GM18951 (cell line): ENCODE measurements at regions of chr11 and their contacts with region 1.

Region 1: DNA sequence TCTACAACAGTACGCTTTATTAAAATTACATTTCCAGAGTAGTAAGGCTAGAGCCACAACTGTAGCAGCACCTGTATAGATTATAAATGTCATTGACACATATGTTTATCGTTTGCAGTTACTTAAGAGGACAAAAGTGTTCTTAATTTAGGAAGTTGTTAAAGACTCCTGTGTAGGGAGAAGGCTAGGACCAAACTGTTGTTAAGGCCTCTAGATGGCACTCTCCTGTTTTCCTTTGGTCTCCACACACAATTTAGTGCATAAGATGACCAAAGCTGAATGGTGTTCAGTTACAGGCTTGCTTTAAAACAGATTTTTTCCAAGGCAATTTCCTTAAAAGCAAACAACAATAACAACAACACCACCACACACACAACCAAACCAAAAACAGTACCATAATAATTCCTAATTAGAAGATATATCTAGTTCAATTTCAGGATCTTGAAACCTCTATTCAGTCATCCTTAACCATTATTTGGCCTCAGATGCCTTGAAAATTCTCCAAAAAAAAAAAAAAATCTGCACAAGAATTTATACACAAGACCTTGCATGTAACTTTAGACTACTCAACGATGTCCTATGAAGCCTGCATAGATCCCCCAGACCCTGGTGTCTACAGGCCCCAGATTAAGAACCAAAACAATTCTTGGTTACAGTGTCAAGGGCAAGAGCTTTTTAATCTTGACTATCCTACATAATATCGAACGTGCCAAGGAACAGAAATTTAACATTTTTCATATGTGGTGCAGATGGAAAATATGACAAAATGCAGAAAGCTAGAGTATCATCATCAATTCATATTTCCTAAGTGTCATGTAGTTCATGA is 42.6 kb upstream of the APOA1 start:
- POLR2A ChIP-seq: no peak

Region 2: GRCh38 chr11:116284950-116285516 is 595.0 kb before region 1 on chr11:
- in situ Hi-C with region 1: no loop called
- POLR2A ChIP-seq: no peak

Region 3: GRCh38 chr11:116535994-116536393 is 344.0 kb before region 1 on chr11:
- in situ Hi-C with region 1: no loop called
- POLR2A ChIP-seq: no peak

Region 4: GRCh38 chr11:116563028-116563711 is 316.8 kb before region 1 on chr11:
- in situ Hi-C with region 1: no loop called
- POLR2A ChIP-seq: no peak

Region 5: GRCh38 chr11:117107701-117108590 is 227.9 kb after region 1 on chr11:
- in situ Hi-C with region 1: loop called (anchors 10 kb)
- POLR2A ChIP-seq: no peak